AG04450 (cell line): ENCODE measurements at regions of chr16 and their contacts with region 1.

Region 1: DNA sequence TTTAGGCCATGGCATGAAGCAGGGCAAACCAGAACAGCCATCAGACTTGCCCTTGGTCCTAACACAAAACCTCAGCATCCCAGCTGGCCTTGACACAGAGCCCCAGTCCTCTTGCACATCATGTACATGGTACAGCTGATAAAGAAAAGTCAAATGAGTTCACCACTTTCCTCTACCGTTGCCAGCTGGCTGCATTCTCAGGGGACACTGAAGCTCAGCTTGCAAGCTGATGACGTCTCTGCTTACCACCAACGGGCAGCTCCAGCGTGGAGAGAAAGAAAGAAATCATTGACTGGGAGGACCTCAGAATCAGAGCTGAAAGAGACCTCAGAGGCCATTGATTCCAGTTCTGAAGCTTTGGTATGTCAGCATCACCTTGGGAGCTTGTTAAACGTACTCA is 80.7 kb upstream of the CES5A start:
- DNase-seq: no peak
- H3K4me3 ChIP-seq: no peak overlapping the region
- H3K27ac ChIP-seq: no peak overlapping the region
- H3K27me3 ChIP-seq: peaks cover 3% of the 10 kb centered on the region
- CTCF ChIP-seq: no peak

Region 2: GRCh38 chr16:55944377-55944802 is 11.5 kb before region 1 on chr16:
- CTCF ChIA-PET with region 1: interaction called, 12 read pairs
- POLR2A ChIA-PET with region 1: no interaction called
- DNase-seq: peak; percentile 30
- H3K4me3 ChIP-seq: no peak overlapping the region
- H3K27ac ChIP-seq: no peak overlapping the region
- H3K27me3 ChIP-seq: no peaks in the 10 kb centered on the region
- CTCF ChIP-seq: peak; percentile 98

Region 3: DNA sequence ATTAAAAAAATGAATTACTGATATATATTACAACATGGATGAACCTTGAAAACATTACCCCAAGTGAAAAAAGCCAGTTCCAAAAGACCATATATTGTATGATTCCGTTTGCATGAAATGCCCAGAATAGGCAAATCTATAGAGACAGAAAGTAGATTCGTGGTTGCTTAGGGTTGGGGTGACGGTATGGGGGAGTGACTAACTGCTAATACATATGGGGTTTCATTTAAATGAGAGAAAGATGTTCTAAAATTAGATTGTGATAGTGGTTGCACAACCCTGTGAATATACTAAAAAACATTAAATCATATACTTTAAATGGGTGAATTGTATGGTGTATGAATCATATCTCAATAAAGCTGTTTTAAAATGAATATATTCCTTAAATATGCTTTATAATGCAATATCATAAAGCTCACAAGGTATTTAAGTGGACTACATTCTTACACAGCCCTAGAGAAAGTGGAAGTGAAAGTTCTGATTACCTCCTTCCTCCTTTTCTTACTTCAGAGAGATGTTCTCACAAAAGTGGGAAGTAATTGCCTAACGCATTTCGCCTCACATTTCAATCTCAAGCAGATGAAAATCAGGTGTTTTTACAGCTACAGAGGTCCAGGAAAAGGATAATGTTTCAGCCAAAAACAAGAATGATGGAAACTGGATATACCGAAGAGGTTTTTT is 92.7 kb after region 1 on chr16:
- CTCF ChIA-PET with region 1: no interaction called
- POLR2A ChIA-PET with region 1: no interaction called
- DNase-seq: no peak
- H3K4me3 ChIP-seq: no peak overlapping the region
- H3K27ac ChIP-seq: no peak overlapping the region
- H3K27me3 ChIP-seq: no peaks in the 10 kb centered on the region
- CTCF ChIP-seq: no peak